Lower leg skin (tissue), 4 donors: ENCODE measurements at regions of chr4 and their contacts with region 1.

Region 1: DNA sequence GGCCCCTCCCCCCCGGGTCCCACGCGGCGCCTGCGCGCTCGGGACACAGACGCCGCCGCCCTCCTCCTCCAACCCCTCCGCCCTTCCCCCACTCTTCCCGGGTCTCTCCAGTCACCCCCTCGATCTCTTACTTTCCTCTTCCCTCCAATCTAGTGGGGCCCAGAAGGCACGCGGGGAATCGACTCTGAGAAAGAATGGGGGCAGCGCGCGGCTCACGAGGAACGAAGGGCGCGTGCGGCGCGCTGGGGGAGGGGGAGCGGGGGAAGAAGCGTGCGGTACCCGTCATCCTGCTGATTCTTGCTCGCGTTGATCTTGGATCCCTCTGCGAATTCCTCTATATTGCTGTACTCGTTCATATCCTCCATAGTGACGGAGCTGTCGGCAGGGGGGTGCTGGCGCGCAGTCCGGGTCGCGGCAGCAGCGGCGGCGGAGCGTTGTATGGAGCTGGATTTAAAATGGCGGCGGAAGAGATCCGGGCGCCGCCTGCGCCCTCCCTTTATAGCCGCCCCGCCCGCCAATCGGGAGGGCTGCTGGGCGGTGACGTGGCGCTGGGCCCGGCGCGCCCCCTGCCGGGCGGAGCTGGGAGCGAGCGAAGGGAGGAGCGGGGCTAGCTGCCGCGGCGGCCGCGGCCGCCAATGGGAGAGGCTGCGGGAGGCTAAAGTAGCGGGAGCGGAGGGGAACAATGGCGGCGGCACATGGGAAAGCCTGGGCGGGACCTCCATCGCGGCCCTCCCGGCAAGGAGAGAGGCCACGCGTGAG is 1.1 kb downstream of the HNRNPDL start:
- DNase-seq: peak; percentile 89 to 98
- H3K4me3 ChIP-seq: peak overlapping the region; percentile 93
- CTCF ChIP-seq: no peak
- POLR2A ChIP-seq: peak in 1 of 2 donors; percentile 39

Region 2: DNA sequence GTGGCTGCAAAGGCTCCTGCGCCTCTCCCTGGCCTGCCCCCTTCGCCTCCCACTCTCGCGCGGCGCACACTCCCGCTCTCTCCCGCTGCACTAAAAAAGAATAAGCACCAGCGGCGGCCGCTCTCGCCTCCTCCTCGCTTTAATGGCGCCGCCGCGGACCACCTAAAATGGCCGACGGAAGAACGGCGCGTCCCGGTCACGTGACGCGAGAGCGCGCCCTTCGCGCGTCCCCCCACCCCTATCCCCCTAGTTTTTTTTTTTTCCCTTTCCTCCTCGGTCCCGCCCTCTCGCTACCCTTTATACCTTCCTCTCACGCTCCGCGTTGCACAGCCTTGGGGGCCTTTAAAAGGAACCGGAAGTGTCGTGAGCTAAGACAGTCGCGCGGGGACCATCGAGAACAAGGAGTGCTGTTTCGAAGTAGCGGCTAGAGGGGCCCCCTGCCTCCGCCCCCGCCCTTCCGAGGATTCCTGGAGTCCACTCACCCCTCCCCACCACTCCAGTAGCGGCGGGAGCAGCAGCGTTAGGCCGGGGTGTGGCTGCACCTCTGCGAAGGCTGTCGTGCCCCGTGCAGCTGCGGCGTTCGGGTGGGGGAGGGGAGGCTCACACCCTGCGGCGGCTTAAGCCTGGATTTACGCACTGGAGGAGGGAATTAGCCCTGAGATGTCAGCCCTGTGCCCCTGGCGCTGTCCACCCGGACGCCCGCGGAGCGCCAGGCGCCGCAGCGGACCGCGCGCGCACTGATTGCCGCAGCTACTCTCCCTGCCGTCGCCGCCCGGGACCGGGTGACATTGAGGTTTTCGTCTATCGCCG is 55.1 kb before region 1 on chr4 and contains the start of gene HNRNPD:
- intact Hi-C with region 1: loop called (anchors 5 kb)
- DNase-seq: peak; percentile 98 to 99
- H3K4me3 ChIP-seq: peak within 1 kb of the TSS; percentile 95
- CTCF ChIP-seq: no peak
- POLR2A ChIP-seq: peak in 1 of 2 donors; percentile 68
- total RNA-seq, gene HNRNPD: 54.0 to 140 (median 60.4) TPM